ENCODE measurements at regions of chr12 and their contacts with region 1.

Region 1: DNA sequence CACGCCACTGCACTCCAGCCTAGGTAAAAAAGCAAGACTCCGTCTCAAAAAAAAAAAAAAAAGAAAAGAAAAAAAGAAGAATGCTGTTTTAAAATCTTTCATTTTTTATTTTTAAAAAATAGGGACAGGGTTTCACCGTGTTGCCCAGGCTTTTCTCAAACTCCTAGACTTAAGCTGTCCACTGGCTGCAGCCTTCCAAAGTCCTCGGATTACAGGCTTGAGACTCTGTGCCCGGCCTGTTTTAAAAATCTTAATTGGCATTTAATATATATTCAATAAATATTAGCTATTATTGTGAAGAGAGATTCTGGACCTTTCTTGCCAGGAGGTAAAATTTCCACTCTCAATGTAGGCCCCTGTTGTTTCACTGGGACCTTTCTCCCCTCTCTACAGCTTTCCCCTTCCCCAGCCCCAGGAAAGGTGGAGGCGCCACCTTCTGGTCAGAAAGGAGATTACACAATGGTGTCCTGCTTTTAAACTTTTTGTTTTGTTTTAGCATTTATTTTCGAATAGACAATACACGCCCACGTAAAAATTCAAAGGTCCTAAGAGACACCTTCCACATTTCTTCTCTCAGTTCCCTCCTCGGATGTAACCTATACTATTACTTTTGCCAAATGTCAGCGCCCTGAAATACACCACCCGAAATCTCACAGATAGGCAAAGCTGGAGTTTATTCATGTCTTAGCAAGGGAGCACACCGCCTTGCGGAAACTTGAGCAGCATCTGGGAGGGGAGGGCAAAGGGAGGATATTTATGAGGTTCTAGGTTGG is 23.8 kb upstream of the PHC1 start:
- DNase-seq: peak; percentile 77
- ATAC-seq: peak; percentile 86
- H3K4me3 ChIP-seq: peak overlapping the region; percentile 45 to 81 (median 62)
- H3K4me3 Mint-ChIP-seq: peak overlapping the region; percentile 89
- H3K27ac ChIP-seq: peak overlapping the region in 1 of 2 donors; percentile 60
- H3K27ac Mint-ChIP-seq: peak overlapping the region; percentile 53
- H3K4me1 ChIP-seq: peaks cover 0 to 4% of the 10 kb centered on the region in 2 donors
- H3K4me1 Mint-ChIP-seq: peaks cover 5% of the 10 kb centered on the region
- H3K27me3 ChIP-seq: no peaks in the 10 kb centered on the region
- H3K27me3 Mint-ChIP-seq: peaks cover 4% of the 10 kb centered on the region
- CTCF ChIP-seq: peak; percentile 96

Region 2: GRCh38 chr12:8544295-8544694 is 346.2 kb before region 1 on chr12:
- CTCF ChIA-PET with region 1: interaction called, 42 read pairs
- POLR2A ChIA-PET with region 1: no interaction called
- intact Hi-C with region 1: loop called (anchors 1 kb)
- DNase-seq: peak; percentile 72
- ATAC-seq: peak; percentile 66
- H3K4me3 ChIP-seq: no peak overlapping the region
- H3K4me3 Mint-ChIP-seq: no peak overlapping the region
- H3K27ac ChIP-seq: no peak overlapping the region
- H3K27ac Mint-ChIP-seq: no peak overlapping the region
- H3K4me1 ChIP-seq: no peaks in the 10 kb centered on the region
- H3K4me1 Mint-ChIP-seq: peaks cover 6% of the 10 kb centered on the region
- H3K27me3 ChIP-seq: peaks cover 0 to 7% (median 3%) of the 10 kb centered on the region in 4 experiments
- H3K27me3 Mint-ChIP-seq: peaks cover 23% of the 10 kb centered on the region
- CTCF ChIP-seq: peak; percentile 100

Region 3: GRCh38 chr12:8675591-8676036 is 214.9 kb before region 1 on chr12:
- CTCF ChIA-PET with region 1: interaction called, 110 read pairs
- POLR2A ChIA-PET with region 1: no interaction called
- intact Hi-C with region 1: no loop called
- DNase-seq: no peak
- ATAC-seq: no peak
- H3K4me3 ChIP-seq: no peak overlapping the region
- H3K4me3 Mint-ChIP-seq: no peak overlapping the region
- H3K27ac ChIP-seq: no peak overlapping the region
- H3K27ac Mint-ChIP-seq: no peak overlapping the region
- H3K4me1 ChIP-seq: no peaks in the 10 kb centered on the region
- H3K4me1 Mint-ChIP-seq: peaks cover 5% of the 10 kb centered on the region
- H3K27me3 ChIP-seq: no peaks in the 10 kb centered on the region
- H3K27me3 Mint-ChIP-seq: peaks cover 4% of the 10 kb centered on the region
- CTCF ChIP-seq: no peak

Region 4: DNA sequence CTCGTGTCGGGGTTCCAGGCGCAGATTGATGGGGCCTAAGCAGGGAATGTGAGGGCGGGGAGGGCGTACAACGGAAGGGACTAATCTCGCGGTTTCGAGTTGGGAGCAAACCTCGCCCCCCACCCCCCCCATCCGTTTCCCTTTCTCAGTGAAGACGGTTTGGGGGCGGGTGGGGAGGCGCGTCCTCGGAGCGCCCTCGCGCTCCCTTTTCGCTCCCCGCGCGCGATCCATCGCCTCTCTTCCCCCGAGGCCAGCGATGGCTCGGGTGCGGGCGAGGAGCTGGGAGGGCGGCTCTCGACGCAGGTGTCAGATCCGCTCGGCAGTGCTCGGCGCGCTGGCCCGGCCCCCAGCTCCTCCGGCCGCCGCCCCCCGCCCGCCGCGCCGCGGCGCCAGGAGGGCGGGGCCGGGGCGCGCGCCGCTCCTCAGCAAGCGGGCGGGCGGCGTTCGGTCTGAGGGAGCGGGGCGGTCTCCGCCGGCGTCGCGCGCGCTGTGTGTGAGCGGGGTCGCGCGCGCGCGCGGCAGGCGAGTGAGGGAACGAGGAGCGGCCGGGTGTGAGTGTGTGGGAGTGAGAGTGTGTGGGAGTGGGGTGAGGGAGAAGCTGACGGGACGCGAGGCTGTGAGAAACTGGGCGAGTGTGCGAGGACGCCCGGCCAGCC is 192.9 kb before region 1 on chr12 and contains the start of gene RIMKLB:
- CTCF ChIA-PET with region 1: interaction called, 7 read pairs
- POLR2A ChIA-PET with region 1: no interaction called
- intact Hi-C with region 1: loop called (anchors 5 kb)
- DNase-seq: peak; percentile 90
- ATAC-seq: peak; percentile 85
- H3K4me3 ChIP-seq: peak within 1 kb of the TSS; percentile 51 to 99 (median 91)
- H3K4me3 Mint-ChIP-seq: peak within 1 kb of the TSS; percentile 97
- H3K27ac ChIP-seq: peak within 1 kb of the TSS; percentile 92 to 94
- H3K27ac Mint-ChIP-seq: peak within 1 kb of the TSS; percentile 98
- H3K4me1 ChIP-seq: peaks cover 24% of the 10 kb centered on the region in 2 donors
- H3K4me1 Mint-ChIP-seq: peaks cover 44% of the 10 kb centered on the region
- H3K27me3 ChIP-seq: no peaks in the 10 kb centered on the region
- H3K27me3 Mint-ChIP-seq: no peaks in the 10 kb centered on the region
- CTCF ChIP-seq: no peak
- total RNA-seq, gene RIMKLB: 54.2 and 64.1 TPM in 2 replicates

Region 5: GRCh38 chr12:8796831-8797626 is 93.5 kb before region 1 on chr12:
- CTCF ChIA-PET with region 1: no interaction called
- POLR2A ChIA-PET with region 1: no interaction called
- intact Hi-C with region 1: no loop called
- DNase-seq: no peak
- ATAC-seq: no peak
- H3K4me3 ChIP-seq: no peak overlapping the region
- H3K4me3 Mint-ChIP-seq: no peak overlapping the region
- H3K27ac ChIP-seq: no peak overlapping the region
- H3K27ac Mint-ChIP-seq: no peak overlapping the region
- H3K4me1 ChIP-seq: no peaks in the 10 kb centered on the region
- H3K4me1 Mint-ChIP-seq: no peaks in the 10 kb centered on the region
- H3K27me3 ChIP-seq: peaks cover 0 to 3% (median 0%) of the 10 kb centered on the region in 4 experiments
- H3K27me3 Mint-ChIP-seq: no peaks in the 10 kb centered on the region
- CTCF ChIP-seq: no peak

Region 6: DNA sequence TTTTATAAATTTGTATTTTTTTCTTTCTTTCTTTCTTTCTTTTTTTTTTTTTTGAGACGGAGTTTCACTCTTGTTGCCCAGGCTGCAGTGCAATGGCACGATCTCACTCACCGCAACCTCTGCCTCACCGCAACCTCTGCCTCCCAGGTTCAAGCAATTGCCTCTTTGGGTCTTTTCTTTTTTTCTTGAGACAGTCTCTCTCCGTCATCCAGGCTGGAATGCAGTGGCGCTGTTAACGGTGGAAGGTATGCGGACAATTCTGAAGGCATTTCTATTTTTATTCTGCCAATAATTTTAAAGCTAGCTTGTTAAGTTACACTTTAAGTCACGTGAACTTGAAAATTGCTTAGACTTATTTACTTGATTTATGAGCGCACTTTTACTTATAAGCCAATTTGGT is 15.0 kb after region 1 on chr12:
- CTCF ChIA-PET with region 1: interaction called, 17 read pairs
- POLR2A ChIA-PET with region 1: interaction called, 5 read pairs
- intact Hi-C with region 1: no loop called
- DNase-seq: no peak
- ATAC-seq: no peak
- H3K4me3 ChIP-seq: no peak overlapping the region
- H3K4me3 Mint-ChIP-seq: no peak overlapping the region
- H3K27ac ChIP-seq: no peak overlapping the region
- H3K27ac Mint-ChIP-seq: no peak overlapping the region
- H3K4me1 ChIP-seq: peaks cover 29 to 40% of the 10 kb centered on the region in 2 donors
- H3K4me1 Mint-ChIP-seq: peaks cover 36% of the 10 kb centered on the region
- H3K27me3 ChIP-seq: no peaks in the 10 kb centered on the region
- H3K27me3 Mint-ChIP-seq: no peaks in the 10 kb centered on the region
- CTCF ChIP-seq: no peak

Region 7: DNA sequence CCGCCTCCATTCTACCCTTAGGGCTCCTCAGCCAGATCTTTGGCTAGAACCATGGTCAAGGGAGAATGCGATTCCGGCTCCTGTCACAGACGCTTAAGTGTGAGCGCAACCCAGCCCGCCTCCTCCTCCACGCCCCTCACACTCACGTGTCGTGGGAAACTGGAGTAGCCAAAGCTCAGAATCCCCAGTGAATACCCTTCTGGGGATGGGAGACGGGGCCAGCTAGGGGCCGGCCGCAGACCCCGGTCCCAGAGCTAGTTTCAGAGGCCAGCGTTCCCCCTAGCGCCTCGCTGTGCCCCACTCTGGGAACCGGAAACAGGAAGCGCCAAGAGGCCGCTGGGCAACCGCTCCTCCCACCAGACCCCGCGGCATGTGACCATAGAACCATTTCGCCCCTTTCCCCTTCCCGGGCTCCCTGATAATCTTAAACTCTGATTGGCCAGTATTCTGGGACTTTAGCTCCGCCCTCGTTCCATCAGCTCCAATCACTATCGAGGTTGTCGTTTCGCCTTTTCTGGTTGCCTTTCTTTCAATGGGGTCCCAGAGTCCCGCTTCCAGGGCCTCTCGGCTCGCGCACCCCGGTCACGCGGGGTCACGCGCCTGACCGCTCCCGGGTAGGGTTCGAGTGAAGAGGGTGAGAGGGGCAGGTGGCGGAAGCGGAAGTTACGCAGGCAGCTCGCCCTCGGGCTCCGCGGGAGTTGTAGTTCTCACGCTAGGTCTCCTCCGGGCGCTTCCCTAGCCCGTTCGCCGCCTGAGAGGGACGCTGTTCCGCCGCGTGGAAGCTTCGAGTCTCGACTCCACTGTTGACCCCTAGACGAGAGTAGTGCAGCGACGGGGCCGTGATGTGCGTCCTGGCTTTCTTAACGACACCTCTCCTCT is 59.1 kb after region 1 on chr12 and contains the start of gene M6PR:
- CTCF ChIA-PET with region 1: interaction called, 8 read pairs
- POLR2A ChIA-PET with region 1: no interaction called
- intact Hi-C with region 1: loop called (anchors 10 kb)
- DNase-seq: peak; percentile 95
- ATAC-seq: peak; percentile 83
- H3K4me3 ChIP-seq: peak within 1 kb of the TSS; percentile 67 to 99 (median 91)
- H3K4me3 Mint-ChIP-seq: peak within 1 kb of the TSS; percentile 95
- H3K27ac ChIP-seq: peak within 1 kb of the TSS; percentile 97 to 98
- H3K27ac Mint-ChIP-seq: peak within 1 kb of the TSS; percentile 98
- H3K4me1 ChIP-seq: peaks cover 31 to 35% of the 10 kb centered on the region in 2 donors
- H3K4me1 Mint-ChIP-seq: peaks cover 44% of the 10 kb centered on the region
- H3K27me3 ChIP-seq: no peaks in the 10 kb centered on the region
- H3K27me3 Mint-ChIP-seq: no peaks in the 10 kb centered on the region
- CTCF ChIP-seq: peak; percentile 47
- total RNA-seq, gene M6PR: 199 and 204 TPM in 2 replicates

Region 8: DNA sequence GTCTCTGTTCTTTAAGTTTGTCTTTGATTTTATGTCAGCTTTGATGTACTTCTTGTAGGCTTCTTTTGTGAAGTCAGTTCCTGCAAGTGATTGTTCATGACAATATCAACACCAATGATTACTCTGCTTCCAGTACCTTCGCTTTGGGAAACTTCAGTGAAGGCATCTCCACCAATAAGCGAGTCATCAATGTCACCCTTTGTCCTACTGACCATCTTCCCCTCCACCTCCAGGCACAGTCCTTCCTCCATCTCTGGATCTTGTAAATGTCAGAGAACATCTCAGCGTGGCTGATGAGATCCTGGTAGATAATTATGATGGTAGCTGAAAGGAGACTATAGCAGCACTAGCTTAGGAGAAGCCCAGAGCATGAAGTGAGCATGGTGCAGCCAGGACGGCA is 265.6 kb after region 1 on chr12:
- CTCF ChIA-PET with region 1: no interaction called
- POLR2A ChIA-PET with region 1: no interaction called
- intact Hi-C with region 1: no loop called
- DNase-seq: no peak
- ATAC-seq: no peak
- H3K4me3 ChIP-seq: no peak overlapping the region
- H3K4me3 Mint-ChIP-seq: no peak overlapping the region
- H3K27ac ChIP-seq: no peak overlapping the region
- H3K27ac Mint-ChIP-seq: no peak overlapping the region
- H3K4me1 ChIP-seq: no peaks in the 10 kb centered on the region
- H3K4me1 Mint-ChIP-seq: no peaks in the 10 kb centered on the region
- H3K27me3 ChIP-seq: peaks cover 0 to 3% (median 0%) of the 10 kb centered on the region in 4 experiments
- H3K27me3 Mint-ChIP-seq: peaks cover 15% of the 10 kb centered on the region
- CTCF ChIP-seq: no peak